ENCODE measurements at regions of chr10 and their contacts with region 1.

Region 1: DNA sequence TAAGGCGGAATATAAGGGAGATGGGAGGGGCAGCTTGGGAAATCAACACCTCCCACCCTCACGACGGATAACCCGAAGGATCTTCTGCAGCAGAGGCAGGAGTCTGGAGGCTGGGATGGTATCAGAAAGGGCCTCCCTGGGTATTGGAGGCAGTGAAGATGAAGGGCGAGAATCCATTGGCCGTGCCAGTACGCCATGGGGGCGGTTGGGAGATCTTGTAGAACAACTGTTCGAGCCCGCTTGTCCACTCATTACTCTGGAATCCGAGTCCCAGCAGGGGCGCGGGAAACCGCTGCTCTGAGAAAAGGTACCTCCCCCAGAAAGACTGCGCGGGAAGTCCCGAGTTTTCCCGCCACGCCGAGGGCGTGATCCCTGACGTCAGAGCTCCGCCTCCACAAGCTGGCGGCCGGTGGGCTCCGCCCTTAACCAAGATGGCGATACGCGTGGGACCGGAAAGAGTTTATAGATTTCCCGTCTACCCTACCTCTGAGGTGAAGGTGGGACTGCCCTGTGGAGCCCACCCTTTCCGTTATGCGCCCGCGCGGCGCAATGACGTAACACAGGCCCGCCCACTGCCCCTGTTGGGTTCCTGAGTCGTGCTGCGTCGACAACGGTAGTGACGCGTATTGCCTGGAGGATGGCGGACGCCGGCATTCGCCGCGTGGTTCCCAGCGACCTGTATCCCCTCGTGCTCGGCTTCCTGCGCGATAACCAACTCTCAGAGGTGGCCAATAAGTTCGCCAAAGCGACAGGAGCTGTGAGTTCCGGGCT is at the start of gene NOLC1:
- DNase-seq: peak; percentile 99 to 100 (median 100)
- ATAC-seq: peak; percentile 93
- H3K4me3 ChIP-seq: peak within 1 kb of the TSS; percentile 80 to 92
- H3K4me3 Mint-ChIP-seq: peak within 1 kb of the TSS; percentile 89
- H3K27ac ChIP-seq: peak within 1 kb of the TSS; percentile 93 to 95
- H3K27ac Mint-ChIP-seq: peak within 1 kb of the TSS; percentile 90
- H3K4me1 ChIP-seq: peaks cover 27% of the 10 kb centered on the region
- H3K4me1 Mint-ChIP-seq: peaks cover 41% of the 10 kb centered on the region
- H3K27me3 ChIP-seq: no peaks in the 10 kb centered on the region
- H3K27me3 Mint-ChIP-seq: no peaks in the 10 kb centered on the region
- CTCF ChIP-seq: no peak
- total RNA-seq, gene NOLC1: 39.5 to 42.0 TPM

Region 2: GRCh38 chr10:102055647-102056419 is 96.1 kb before region 1 on chr10 and contains the start of gene ARMH3:
- CTCF ChIA-PET with region 1: no interaction called
- POLR2A ChIA-PET with region 1: interaction called, 3 read pairs
- intact Hi-C with region 1: loop called (anchors 1 to 2 kb)
- DNase-seq: peak; percentile 75 to 95 (median 87)
- ATAC-seq: peak; percentile 93
- H3K4me3 ChIP-seq: peak within 1 kb of the TSS; percentile 93 to 94
- H3K4me3 Mint-ChIP-seq: peak within 1 kb of the TSS; percentile 97
- H3K27ac ChIP-seq: peak within 1 kb of the TSS; percentile 79 to 90
- H3K27ac Mint-ChIP-seq: peak within 1 kb of the TSS; percentile 95
- H3K4me1 ChIP-seq: peaks cover 40% of the 10 kb centered on the region
- H3K4me1 Mint-ChIP-seq: peaks cover 42% of the 10 kb centered on the region
- H3K27me3 ChIP-seq: no peaks in the 10 kb centered on the region
- H3K27me3 Mint-ChIP-seq: no peaks in the 10 kb centered on the region
- CTCF ChIP-seq: no peak
- total RNA-seq, gene ARMH3: 18.6 to 20.6 TPM

Region 3: DNA sequence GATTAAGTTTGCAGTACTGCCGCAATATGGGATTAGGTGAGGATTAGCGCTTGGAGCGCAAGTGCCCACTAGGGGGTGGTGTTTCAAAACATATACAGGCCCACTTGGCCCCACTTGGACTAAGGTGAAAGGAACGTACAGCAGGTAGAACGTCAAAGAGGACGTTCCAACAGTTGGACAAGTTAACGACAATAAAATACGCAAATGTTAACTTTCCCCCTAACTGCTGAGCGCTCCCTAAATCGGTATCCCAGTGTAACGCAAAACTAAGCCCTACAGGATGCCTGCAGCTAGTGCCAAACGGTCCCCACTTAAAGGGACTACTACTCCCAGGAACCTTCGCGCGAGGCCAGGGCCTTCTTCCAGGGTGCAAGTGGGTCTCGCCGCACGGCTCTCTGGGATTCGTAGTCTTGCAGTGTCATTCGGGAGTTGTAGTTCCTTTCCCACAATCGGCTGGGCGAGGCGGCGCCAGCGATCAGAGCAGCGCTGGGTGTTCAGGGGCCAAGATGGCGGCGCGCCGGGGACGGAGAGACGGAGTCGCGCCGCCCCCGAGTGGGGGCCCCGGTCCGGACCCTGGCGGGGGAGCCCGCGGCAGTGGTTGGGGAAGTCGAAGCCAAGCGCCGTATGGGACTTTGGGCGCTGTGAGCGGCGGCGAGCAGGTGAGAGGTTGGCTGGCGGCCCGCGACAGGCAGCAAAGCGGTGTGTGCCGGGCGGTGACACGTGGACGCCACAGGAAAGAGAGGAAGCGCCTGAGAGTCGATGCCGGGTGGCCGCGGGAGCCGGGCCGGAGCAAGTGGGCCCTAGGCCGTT is 19.2 kb before region 1 on chr10 and contains the start of gene PPRC1:
- CTCF ChIA-PET with region 1: interaction called, 5 read pairs
- POLR2A ChIA-PET with region 1: interaction called, 7 read pairs
- intact Hi-C with region 1: loop called (anchors 1 kb)
- DNase-seq: peak; percentile 91 to 99 (median 96)
- ATAC-seq: peak; percentile 93
- H3K4me3 ChIP-seq: peak within 1 kb of the TSS; percentile 79 to 96
- H3K4me3 Mint-ChIP-seq: peak within 1 kb of the TSS; percentile 96
- H3K27ac ChIP-seq: peak within 1 kb of the TSS; percentile 75 to 92
- H3K27ac Mint-ChIP-seq: peak within 1 kb of the TSS; percentile 95
- H3K4me1 ChIP-seq: peaks cover 26% of the 10 kb centered on the region
- H3K4me1 Mint-ChIP-seq: peaks cover 40% of the 10 kb centered on the region
- H3K27me3 ChIP-seq: no peaks in the 10 kb centered on the region
- H3K27me3 Mint-ChIP-seq: no peaks in the 10 kb centered on the region
- CTCF ChIP-seq: peak; percentile 96
- total RNA-seq, gene PPRC1: 35.2 to 38.5 TPM

Region 4: GRCh38 chr10:102394079-102394800 is 242.3 kb after region 1 on chr10:
- CTCF ChIA-PET with region 1: no interaction called
- POLR2A ChIA-PET with region 1: no interaction called
- intact Hi-C with region 1: loop called (anchors 1 kb)
- DNase-seq: peak; percentile 95 to 99 (median 98)
- ATAC-seq: peak; percentile 74
- H3K4me3 ChIP-seq: peak overlapping the region; percentile 89 to 95
- H3K4me3 Mint-ChIP-seq: peak overlapping the region; percentile 90
- H3K27ac ChIP-seq: peak overlapping the region; percentile 99 to 100
- H3K27ac Mint-ChIP-seq: peak overlapping the region; percentile 98
- H3K4me1 ChIP-seq: peaks cover 24% of the 10 kb centered on the region
- H3K4me1 Mint-ChIP-seq: peaks cover 37% of the 10 kb centered on the region
- H3K27me3 ChIP-seq: no peaks in the 10 kb centered on the region
- H3K27me3 Mint-ChIP-seq: no peaks in the 10 kb centered on the region
- CTCF ChIP-seq: no peak

Region 5: GRCh38 chr10:102450194-102450938 is 298.4 kb after region 1 on chr10:
- CTCF ChIA-PET with region 1: no interaction called
- POLR2A ChIA-PET with region 1: no interaction called
- intact Hi-C with region 1: loop called in 1 of 2 experiments (anchors 1 kb)
- DNase-seq: peak; percentile 78 to 98 (median 89)
- ATAC-seq: peak; percentile 77
- H3K4me3 ChIP-seq: peak overlapping the region; percentile 73 to 92
- H3K4me3 Mint-ChIP-seq: peak overlapping the region; percentile 92
- H3K27ac ChIP-seq: peak overlapping the region; percentile 76 to 88
- H3K27ac Mint-ChIP-seq: peak overlapping the region; percentile 94
- H3K4me1 ChIP-seq: peaks cover 16% of the 10 kb centered on the region
- H3K4me1 Mint-ChIP-seq: peaks cover 23% of the 10 kb centered on the region
- H3K27me3 ChIP-seq: no peaks in the 10 kb centered on the region
- H3K27me3 Mint-ChIP-seq: no peaks in the 10 kb centered on the region
- CTCF ChIP-seq: no peak

Region 6: DNA sequence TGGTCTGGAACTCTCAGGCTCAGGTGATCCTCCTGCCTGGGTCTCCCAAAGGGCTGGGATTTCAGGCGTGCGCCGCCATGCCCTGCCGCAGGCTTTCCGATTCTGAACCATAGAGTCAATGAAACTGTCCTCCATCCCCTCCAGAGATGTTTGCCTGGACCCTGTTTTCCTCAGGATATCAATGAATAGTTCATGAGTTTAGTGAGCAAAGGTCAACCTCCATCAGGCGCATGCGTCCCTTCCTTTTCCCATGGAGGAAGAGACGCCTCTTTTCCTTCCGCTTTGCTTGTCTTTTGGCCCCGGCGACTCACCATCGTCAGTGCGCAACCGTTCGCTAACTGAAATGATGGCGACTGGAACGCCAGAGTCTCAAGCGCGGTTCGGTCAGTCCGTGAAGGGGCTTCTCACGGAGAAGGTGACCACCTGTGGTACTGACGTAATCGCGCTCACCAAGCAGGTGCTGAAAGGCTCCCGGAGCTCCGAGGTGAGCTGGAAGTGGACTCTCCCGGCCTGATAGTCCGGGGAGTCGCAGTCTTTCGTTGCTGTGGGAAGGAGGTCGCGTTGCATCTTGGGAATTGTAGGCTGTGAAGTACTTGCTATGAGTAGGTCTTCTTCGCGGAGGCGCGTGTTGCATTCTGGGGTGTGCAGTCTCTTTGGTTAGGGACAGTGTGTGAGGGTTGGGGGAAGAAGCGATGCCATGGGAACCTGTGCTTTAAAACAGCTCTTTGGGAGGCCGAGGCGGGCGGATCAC is 702.2 kb after region 1 on chr10 and contains the start of gene BORCS7:
- CTCF ChIA-PET with region 1: no interaction called
- POLR2A ChIA-PET with region 1: no interaction called
- intact Hi-C with region 1: loop called (anchors 2 to 10 kb)
- DNase-seq: peak; percentile 68 to 95 (median 87)
- ATAC-seq: peak; percentile 99
- H3K4me3 ChIP-seq: peak within 1 kb of the TSS; percentile 99
- H3K4me3 Mint-ChIP-seq: peak within 1 kb of the TSS; percentile 99
- H3K27ac ChIP-seq: peak within 1 kb of the TSS; percentile 90 to 98
- H3K27ac Mint-ChIP-seq: peak within 1 kb of the TSS; percentile 99
- H3K4me1 ChIP-seq: peaks cover 5% of the 10 kb centered on the region
- H3K4me1 Mint-ChIP-seq: peaks cover 17% of the 10 kb centered on the region
- H3K27me3 ChIP-seq: no peaks in the 10 kb centered on the region
- H3K27me3 Mint-ChIP-seq: no peaks in the 10 kb centered on the region
- CTCF ChIP-seq: no peak
- total RNA-seq, gene BORCS7: 13.7 to 13.9 TPM